Naive thymus-derived CD4-positive, alpha-beta T cell (primary cell): ENCODE measurements at regions of chr10 and their contacts with region 1.

Region 1: DNA sequence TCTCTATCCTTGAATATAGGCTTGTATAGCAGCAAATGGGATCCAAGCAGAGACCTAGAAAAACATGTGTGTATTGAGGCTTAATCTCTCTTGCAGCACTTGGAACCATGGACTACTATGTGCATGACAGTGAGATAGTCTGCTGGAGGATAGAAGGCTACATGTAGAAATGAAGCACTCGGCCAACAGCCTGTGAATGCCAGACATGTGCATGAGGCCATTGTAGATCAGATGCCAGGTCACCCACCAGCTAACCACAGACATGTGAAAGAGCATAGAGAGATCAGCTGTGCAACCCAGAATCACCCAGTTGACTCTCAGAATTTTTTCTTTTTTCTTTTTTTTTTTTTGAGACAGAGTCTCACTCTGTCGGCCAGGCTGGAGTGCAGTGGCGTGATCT is 90.9 kb downstream of the NT5C2 start:
- DNase-seq: no peak
- ATAC-seq: no peak
- H3K4me3 ChIP-seq: no peak overlapping the region
- H3K4me3 Mint-ChIP-seq: no peak overlapping the region
- H3K27ac ChIP-seq: no peak overlapping the region
- H3K27ac Mint-ChIP-seq: peak overlapping the region in 6 of 9 donors; percentile 5 to 70 (median 33)
- H3K4me1 ChIP-seq: no peaks in the 10 kb centered on the region
- H3K4me1 Mint-ChIP-seq: peaks cover 0 to 6% (median 0%) of the 10 kb centered on the region in 7 donors
- H3K27me3 ChIP-seq: no peaks in the 10 kb centered on the region
- H3K27me3 Mint-ChIP-seq: no peaks in the 10 kb centered on the region

Region 2: GRCh38 chr10:103244663-103245271 is 142.6 kb after region 1 on chr10:
- CTCF ChIA-PET with region 1: interaction called, 6 read pairs
- POLR2A ChIA-PET with region 1: no interaction called
- intact Hi-C with region 1: loop called in 1 of 2 experiments (anchors 5 kb)
- DNase-seq: peak; percentile 31 to 67 (median 52)
- ATAC-seq: peak; percentile 79
- H3K4me3 ChIP-seq: no peak overlapping the region
- H3K4me3 Mint-ChIP-seq: no peak overlapping the region
- H3K27ac ChIP-seq: no peak overlapping the region
- H3K27ac Mint-ChIP-seq: no peak overlapping the region
- H3K4me1 ChIP-seq: no peaks in the 10 kb centered on the region
- H3K4me1 Mint-ChIP-seq: peaks cover 3 to 28% (median 6%) of the 10 kb centered on the region in 7 donors
- H3K27me3 ChIP-seq: no peaks in the 10 kb centered on the region
- H3K27me3 Mint-ChIP-seq: peaks cover 0 to 13% (median 7%) of the 10 kb centered on the region in 5 donors